ENCODE measurements at regions of chr13 and their contacts with region 1.

Region 1: GRCh38 chr13:36858290-36858689 is 39.3 kb downstream of the RFXAP start:
- DNase-seq: no peak
- ATAC-seq: no peak
- H3K4me3 Mint-ChIP-seq: no peak overlapping the region
- H3K27ac Mint-ChIP-seq: no peak overlapping the region
- H3K4me1 Mint-ChIP-seq: peaks cover 12% of the 10 kb centered on the region
- H3K27me3 Mint-ChIP-seq: peaks cover 17% of the 10 kb centered on the region

Region 2: GRCh38 chr13:36981156-36981743 is 123.0 kb after region 1 on chr13:
- CTCF ChIA-PET with region 1: interaction called, 12 read pairs
- DNase-seq: no peak
- ATAC-seq: no peak
- H3K4me3 Mint-ChIP-seq: no peak overlapping the region
- H3K27ac Mint-ChIP-seq: no peak overlapping the region
- H3K4me1 Mint-ChIP-seq: peaks cover 3% of the 10 kb centered on the region
- H3K27me3 Mint-ChIP-seq: no peaks in the 10 kb centered on the region